ENCODE measurements at regions of chr12 and their contacts with region 1.

Region 1: DNA sequence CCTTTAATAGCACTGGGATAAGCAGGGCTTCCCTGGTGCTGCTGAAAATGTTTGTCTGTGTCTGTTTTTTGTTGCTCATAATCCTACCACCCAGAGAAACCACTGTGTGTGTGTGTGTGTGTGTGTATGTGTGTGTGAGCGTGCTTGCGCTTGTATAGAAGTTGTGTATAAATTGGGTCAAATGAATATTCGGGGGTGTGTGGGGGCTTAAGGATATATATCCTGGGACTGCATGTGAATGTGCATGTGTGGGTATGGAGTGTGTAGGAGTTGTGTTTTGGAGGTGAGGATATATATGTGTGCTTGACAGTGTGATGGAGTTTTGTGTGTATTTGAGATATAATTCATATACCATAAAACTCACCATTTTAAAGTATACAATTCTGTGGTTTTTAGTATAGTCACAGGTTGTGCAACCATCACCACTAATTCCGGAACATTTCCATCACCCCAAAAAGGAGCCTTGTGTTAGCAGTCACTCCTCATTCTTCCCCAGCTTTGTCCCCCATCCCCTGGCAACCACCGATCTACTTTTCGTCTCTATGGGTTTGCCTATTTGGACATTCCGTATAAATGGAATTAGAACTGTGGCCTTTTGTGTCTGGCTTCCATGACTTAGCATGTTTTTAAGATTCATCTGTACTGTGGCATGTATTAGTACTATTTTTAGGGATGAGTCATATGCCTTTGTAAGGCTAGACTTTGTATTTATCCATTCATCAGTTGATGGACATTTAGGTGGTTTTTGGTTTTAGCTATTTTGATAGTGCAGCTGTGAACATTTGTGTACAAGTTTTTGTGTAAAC is 25.6 kb downstream of the TCTN1 start:
- DNase-seq: no peak
- CTCF ChIP-seq: no peak

Region 2: DNA sequence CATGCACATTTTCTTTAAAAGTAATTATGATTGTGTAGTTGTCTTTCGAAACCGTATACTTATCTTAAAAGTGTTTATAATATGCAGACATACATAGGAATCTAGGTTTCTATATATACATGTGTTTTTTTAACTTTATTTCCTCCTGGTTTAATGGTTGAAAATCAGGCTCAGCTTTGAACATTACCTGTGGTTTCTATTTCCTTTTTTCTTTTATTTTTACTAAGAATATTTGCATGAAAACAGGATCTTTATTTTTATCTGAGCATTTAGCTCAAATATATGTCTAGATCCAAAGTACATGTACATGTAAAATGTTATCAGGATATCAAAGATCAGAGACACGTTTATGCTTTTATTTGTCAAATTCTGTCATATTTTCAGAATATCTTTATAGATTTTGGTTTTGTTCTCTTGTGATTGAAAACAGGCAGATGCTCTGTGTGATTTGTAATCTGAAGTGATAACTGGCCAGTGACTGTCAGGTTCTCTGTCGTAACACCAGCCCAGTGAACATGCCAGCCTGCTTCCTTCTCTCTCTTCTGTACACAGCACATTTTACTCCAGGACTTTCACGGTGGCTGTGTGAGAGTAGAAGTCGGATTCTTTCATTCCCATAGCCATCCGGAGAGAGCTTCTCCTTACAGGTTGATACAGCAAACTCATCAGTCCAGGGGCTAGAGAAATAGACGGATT is 11.9 kb before region 1 on chr12:
- CTCF ChIA-PET with region 1: interaction called, 15 read pairs
- POLR2A ChIA-PET with region 1: no interaction called
- DNase-seq: no peak
- CTCF ChIP-seq: no peak